Gastrocnemius medialis (tissue), 4 donors: ENCODE measurements at regions of chr12 and their contacts with region 1.

Region 1: DNA sequence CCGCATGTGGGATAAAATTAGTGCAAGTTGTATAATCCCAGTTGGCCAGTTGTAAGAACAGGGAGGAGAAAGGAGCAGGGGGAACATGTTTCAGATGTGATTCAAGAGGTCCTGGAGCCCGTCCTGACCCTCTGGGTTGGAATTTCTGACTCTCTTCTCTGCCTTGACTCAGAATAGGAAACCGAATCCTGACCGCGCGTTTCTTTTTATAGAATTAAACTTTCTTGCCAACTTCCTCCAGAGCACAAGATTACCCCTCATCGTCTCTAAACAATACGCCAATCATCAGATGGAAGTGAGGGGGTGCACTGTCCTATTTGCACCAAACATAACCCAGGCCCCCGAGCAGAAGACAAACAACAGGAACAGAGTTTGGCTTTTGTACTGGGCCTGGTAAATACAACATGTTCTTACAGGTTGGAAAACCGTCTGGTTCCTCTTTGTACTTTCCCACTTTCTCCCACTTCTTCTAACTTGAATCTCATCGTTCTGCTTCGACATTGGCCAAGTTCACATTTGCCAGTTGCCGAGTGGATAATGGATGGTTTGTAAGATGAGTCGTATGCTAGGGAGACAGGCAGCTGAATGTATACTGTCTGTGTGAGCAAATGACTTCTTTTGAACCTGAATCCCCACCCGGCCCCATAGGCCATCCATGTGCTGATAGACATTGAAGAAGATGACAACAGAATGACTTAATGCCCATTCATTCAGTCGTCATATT is 42.6 kb upstream of the MED13L start:
- DNase-seq: peak; percentile 84 to 93
- ATAC-seq: peak; percentile 93 to 95
- H3K4me3 ChIP-seq: peak overlapping the region; percentile 21 to 44 (median 34)
- H3K27ac ChIP-seq: peak overlapping the region; percentile 78 to 92 (median 84)
- H3K4me1 ChIP-seq: peaks cover 28 to 32% of the 10 kb centered on the region in 2 donors
- H3K27me3 ChIP-seq: no peaks in the 10 kb centered on the region
- CTCF ChIP-seq: no peak
- POLR2A ChIP-seq: no peak

Region 2: DNA sequence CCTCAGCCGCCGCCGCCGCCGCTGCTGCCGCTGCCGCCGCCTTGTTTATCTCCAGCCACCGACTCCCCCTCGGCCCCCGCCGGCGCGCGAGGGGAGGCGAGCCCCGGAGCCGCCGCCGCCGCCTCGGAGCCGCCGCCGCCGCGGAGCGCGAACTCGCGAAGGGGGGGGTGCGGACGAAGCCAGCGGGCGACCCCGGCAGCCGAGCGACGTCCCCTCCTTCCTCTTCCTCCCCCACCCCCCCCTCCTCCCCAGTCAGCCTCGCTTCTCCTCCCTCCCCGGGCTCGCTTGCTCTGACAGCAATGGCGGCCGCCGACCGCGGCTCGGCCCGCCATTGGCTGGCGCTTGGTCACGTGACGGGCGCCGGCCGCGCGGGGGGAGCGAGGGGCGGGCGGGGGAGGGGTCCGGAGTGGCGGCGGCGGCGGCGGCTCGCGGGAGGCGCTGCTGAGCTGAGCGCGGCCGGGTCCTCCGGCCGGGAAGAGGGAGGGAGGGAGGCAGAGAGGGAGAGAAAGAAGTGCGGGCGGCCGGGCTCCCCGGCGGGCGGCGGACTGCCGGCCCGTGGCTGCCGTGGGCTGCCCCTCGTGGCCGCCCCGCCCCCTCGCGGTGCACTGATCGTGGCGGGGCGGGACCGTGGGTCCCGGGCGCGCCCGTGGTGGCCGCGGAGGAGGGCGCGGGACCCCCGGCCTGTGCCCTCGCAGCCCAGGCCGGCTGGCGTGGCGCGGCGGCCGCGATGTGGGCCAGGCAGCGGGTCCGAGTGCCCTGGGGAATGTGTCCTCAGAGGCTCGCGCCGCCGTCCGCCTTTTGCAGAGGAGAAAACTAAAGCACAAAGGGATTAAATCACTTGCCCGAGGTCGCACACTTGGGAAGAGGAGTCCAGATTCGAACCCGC is 42.4 kb before region 1 on chr12 and contains the start of gene MED13L:
- in situ Hi-C with region 1: no loop called
- intact Hi-C with region 1: loop called (anchors 1 kb)
- DNase-seq: peak; percentile 80 to 88
- ATAC-seq: peak; percentile 85 to 86
- H3K4me3 ChIP-seq: peak within 1 kb of the TSS; percentile 69 to 95 (median 88)
- H3K27ac ChIP-seq: peak within 1 kb of the TSS; percentile 87 to 99 (median 96)
- H3K4me1 ChIP-seq: peaks cover 28 to 37% of the 10 kb centered on the region in 2 donors
- H3K27me3 ChIP-seq: no peaks in the 10 kb centered on the region
- CTCF ChIP-seq: peak in 3 of 5 experiments; percentile 30 to 73 (median 52)
- POLR2A ChIP-seq: peak; percentile 83 to 86
- total RNA-seq, gene MED13L: 59.5 to 92.6 (median 74.1) TPM

Region 3: GRCh38 chr12:116358893-116359761 is 39.1 kb after region 1 on chr12:
- in situ Hi-C with region 1: no loop called
- intact Hi-C with region 1: loop called (anchors 1 kb)
- DNase-seq: peak; percentile 84 to 91
- ATAC-seq: peak; percentile 89 to 90
- H3K4me3 ChIP-seq: peak overlapping the region in 1 of 4 donors; percentile 22
- H3K27ac ChIP-seq: peak overlapping the region; percentile 69 to 80 (median 76)
- H3K4me1 ChIP-seq: peaks cover 23 to 30% of the 10 kb centered on the region in 2 donors
- H3K27me3 ChIP-seq: no peaks in the 10 kb centered on the region
- CTCF ChIP-seq: no peak
- POLR2A ChIP-seq: no peak

Region 4: DNA sequence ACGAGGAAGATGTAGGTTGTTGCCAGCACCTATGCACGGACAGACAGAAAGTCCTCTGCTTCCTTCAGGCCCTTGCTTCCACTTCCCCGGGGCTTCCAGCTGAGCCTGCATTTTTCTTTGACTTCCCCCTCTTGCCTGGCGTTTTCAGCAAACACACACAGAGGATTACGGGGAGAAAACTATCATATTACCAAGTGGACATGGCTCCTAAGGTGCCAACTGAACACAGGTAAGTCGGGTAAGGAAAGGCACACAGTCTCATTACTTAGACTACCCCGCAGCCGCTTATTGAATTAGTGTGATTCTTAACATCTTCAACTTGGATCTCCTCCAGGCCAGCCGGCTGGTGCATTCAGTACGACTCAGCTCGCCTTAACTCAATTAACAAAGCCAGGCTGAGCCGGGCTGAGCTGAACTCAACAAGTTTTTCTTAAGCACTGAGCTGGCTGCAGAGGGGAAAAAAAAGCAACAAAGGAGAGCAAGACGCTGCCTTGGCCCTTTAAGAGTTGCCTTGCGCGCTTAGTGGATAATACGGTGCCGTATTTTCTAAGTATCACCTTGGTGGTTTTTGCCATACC is 219.9 kb after region 1 on chr12:
- in situ Hi-C with region 1: no loop called
- intact Hi-C with region 1: loop called (anchors 5 kb)
- DNase-seq: peak in 1 of 2 donors; percentile 18
- ATAC-seq: no peak
- H3K4me3 ChIP-seq: peak overlapping the region in 1 of 4 donors; percentile 1
- H3K27ac ChIP-seq: peak overlapping the region in 2 of 4 donors; percentile 35 to 46
- H3K4me1 ChIP-seq: peaks cover 0 to 15% of the 10 kb centered on the region in 2 donors
- H3K27me3 ChIP-seq: no peaks in the 10 kb centered on the region
- CTCF ChIP-seq: no peak
- POLR2A ChIP-seq: no peak